ENCODE measurements at regions of chr19 and their contacts with region 1.

Region 1: GRCh38 chr19:46030812-46031550 is 8.1 kb upstream of the PGLYRP1 start:
- DNase-seq: no peak
- ATAC-seq: no peak
- H3K4me3 Mint-ChIP-seq: no peak overlapping the region
- H3K27ac Mint-ChIP-seq: no peak overlapping the region
- H3K4me1 Mint-ChIP-seq: no peaks in the 10 kb centered on the region
- H3K27me3 Mint-ChIP-seq: no peaks in the 10 kb centered on the region; the same call in 1 of the 2 replicates
- CTCF ChIP-seq: no peak

Region 2: GRCh38 chr19:45862564-45863334 is 168.2 kb before region 1 on chr19 and contains the start of gene SYMPK:
- CTCF ChIA-PET with region 1: interaction called, 15 read pairs
- POLR2A ChIA-PET with region 1: no interaction called
- DNase-seq: peak; percentile 99
- ATAC-seq: peak; percentile 93
- H3K4me3 Mint-ChIP-seq: peak within 1 kb of the TSS; percentile 89
- H3K27ac Mint-ChIP-seq: peak within 1 kb of the TSS; percentile 99
- H3K4me1 Mint-ChIP-seq: peaks cover 40% of the 10 kb centered on the region
- H3K27me3 Mint-ChIP-seq: no peaks in the 10 kb centered on the region
- CTCF ChIP-seq: no peak
- total RNA-seq, gene SYMPK: 105 to 111 TPM (median 106 TPM) in 3 replicates

Region 3: DNA sequence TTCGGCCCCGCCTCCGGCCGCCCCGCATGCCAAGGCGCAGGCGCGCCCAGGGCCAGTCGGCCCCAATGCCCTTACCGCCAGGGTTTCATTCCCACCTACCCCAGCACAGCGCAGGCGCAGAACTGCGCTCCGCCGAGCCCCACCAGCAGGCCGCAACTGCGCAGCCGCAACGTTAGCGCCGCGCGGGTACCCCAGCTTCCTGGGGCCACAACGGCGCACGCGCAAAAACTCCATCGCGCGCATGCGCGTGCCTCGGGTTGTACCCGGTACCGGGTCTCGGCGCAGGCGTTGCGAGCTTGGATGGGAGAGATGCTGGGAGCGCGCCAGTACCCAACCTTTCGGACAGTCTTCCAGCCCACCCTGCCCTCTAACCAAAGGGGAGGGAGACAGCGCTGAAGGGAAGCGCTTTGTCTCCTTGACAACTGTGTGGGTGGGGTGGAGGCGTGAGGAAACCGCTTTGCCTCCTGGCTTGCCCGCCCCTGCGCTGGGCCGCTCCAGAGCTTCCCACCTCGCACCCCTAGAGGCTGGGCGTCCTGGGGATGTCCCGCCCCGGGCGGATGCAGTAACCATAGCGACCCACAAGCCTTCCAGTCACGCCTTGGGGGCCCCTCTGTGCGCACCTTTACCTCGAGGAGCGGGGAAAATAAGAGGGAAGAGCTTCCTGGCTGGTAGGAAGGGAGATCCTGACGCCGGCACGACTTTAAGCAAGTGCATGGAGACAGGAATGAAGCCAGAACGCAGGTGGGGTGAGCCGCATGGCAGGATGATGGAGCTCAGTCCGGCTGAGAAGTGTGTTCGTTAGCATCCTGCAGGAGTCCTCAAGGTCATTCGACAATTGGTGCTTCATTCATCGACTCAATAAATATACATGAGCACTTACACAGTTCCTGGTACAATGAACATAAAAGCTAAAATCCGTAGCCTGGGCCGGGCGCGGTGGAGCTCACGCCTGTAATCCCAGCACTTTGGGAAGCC is 128.0 kb before region 1 on chr19:
- CTCF ChIA-PET with region 1: interaction called, 16 read pairs
- POLR2A ChIA-PET with region 1: no interaction called
- DNase-seq: peak; percentile 99
- ATAC-seq: peak; percentile 84
- H3K4me3 Mint-ChIP-seq: peak overlapping the region; percentile 91
- H3K27ac Mint-ChIP-seq: peak overlapping the region; percentile 57; the same call in 1 of the 2 replicates
- H3K4me1 Mint-ChIP-seq: peaks cover 12% of the 10 kb centered on the region
- H3K27me3 Mint-ChIP-seq: peaks cover 25% of the 10 kb centered on the region
- CTCF ChIP-seq: no peak

Region 4: GRCh38 chr19:45973578-45974338 is 57.2 kb before region 1 on chr19 and contains the start of gene NOVA2:
- CTCF ChIA-PET with region 1: interaction called, 16 read pairs
- POLR2A ChIA-PET with region 1: no interaction called
- DNase-seq: peak; percentile 99
- ATAC-seq: peak; percentile 99
- H3K4me3 Mint-ChIP-seq: peak within 1 kb of the TSS; percentile 61
- H3K27ac Mint-ChIP-seq: no peak within 1 kb of the TSS
- H3K4me1 Mint-ChIP-seq: peaks cover 16% of the 10 kb centered on the region
- H3K27me3 Mint-ChIP-seq: peaks cover 87% of the 10 kb centered on the region
- CTCF ChIP-seq: no peak
- total RNA-seq, gene NOVA2: 11.3 to 15.6 TPM (median 15.4 TPM) in 3 replicates

Region 5: DNA sequence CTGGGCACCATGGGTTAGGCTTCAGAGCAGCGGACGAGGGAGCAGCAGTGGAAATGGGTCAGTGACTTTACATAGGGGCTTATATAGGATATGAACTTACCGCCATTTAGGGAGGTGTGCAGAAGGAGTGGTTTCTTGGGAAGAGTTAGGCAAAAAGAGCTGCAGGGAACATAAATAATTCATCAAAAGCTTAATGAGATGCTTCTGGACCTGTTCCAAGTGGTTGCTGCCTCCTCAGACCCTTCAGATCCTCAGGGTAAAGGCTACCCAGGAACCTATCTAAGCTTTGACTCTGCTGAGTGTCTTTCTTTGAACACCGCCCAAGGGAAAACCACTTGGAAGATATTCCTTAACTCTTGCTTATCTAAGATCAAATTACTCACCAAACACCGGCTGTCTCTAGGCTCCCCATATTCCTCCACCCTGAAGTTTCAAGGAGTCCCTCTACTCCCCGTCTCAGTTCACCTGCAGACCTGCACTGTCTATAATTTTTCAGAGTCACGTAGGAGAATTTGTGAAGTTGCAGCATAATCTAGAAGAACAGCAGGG is 10.0 kb after region 1 on chr19 and contains the start of gene IGFL4:
- CTCF ChIA-PET with region 1: interaction called, 80 read pairs
- POLR2A ChIA-PET with region 1: no interaction called
- DNase-seq: no peak
- ATAC-seq: no peak
- H3K4me3 Mint-ChIP-seq: no peak within 1 kb of the TSS
- H3K27ac Mint-ChIP-seq: no peak within 1 kb of the TSS
- H3K4me1 Mint-ChIP-seq: peaks cover 7% of the 10 kb centered on the region
- H3K27me3 Mint-ChIP-seq: peaks cover 71% of the 10 kb centered on the region
- CTCF ChIP-seq: no peak
- total RNA-seq, gene IGFL4: 0.20 to 0.37 TPM (median 0.34 TPM) in 3 replicates

Region 6: DNA sequence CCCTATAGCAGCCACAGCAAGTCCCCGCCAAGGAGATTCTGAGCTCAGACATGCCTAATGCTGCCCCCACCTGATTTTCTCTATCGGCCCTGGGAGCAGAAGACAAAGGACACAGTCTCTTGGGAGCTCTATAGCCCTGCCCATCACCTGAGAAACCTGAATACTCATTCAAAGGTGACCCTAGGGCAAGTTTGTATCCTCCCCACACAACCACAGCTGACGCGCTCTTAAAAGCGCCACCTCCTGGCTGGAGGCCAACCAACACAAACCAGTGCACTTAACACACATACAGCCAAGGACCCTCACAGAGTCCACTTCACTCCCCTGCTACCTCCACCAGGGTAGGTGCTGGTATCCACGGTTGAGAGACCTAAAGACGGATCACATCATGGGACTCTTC is 18.6 kb after region 1 on chr19:
- CTCF ChIA-PET with region 1: interaction called, 80 read pairs
- POLR2A ChIA-PET with region 1: no interaction called
- DNase-seq: peak; percentile 79
- ATAC-seq: peak; percentile 99
- H3K4me3 Mint-ChIP-seq: no peak overlapping the region
- H3K27ac Mint-ChIP-seq: no peak overlapping the region; the same call in 1 of the 2 replicates
- H3K4me1 Mint-ChIP-seq: no peaks in the 10 kb centered on the region
- H3K27me3 Mint-ChIP-seq: peaks cover 74% of the 10 kb centered on the region
- CTCF ChIP-seq: peak; percentile 37; the same call in 1 of the 2 replicates

Region 7: DNA sequence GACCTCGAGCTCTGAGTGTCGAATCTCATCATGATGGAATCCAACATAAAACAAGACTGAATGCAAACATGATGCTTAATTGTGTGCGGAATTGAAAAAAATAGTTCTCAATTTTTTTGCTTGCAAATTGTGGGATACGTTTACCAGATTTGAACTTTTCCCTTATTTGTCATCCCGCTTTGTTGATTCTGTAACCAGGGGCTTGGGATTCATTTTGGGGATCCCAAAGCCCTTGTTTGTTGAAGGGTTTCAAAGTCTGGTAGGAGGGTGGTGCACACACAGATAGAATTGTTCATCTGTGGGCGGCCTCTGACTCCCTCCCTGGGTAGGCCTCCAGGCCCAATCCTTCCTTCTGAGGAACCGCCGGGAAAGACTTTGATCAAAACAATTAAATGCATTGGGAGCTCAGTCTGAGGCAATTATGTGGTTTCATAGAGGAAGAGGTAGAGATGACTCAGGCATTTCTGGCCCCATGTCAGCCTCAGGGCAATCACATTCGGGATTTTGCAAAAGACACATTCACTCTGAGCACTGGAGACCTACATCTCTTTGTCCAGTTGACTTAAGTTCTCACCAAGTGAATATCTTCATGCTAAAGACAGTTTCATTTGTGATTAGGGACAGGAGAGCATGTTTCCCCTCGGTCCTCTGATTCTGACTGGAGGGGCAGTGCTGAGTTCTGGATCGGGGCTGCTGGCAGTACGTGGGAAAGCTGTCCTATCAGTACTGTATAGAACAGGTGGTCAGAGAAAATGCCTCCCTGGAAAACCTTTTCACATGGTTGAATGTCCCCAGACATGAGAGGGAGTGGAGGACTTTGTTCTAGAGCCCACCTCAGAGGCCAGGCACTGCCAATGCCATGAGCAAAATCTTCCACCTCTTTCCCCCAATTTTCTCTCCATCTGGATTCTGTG is 37.6 kb after region 1 on chr19:
- CTCF ChIA-PET with region 1: interaction called, 20 read pairs
- POLR2A ChIA-PET with region 1: no interaction called
- DNase-seq: no peak
- ATAC-seq: no peak
- H3K4me3 Mint-ChIP-seq: no peak overlapping the region
- H3K27ac Mint-ChIP-seq: no peak overlapping the region
- H3K4me1 Mint-ChIP-seq: no peaks in the 10 kb centered on the region
- H3K27me3 Mint-ChIP-seq: peaks cover 72% of the 10 kb centered on the region
- CTCF ChIP-seq: no peak